Breast epithelium (tissue), 4 donors: ENCODE measurements at regions of chr18 and their contacts with region 1.

Region 1: GRCh38 chr18:35121531-35121930 is 80.3 kb downstream of the MAPRE2 start:
- DNase-seq: no peak
- H3K4me3 ChIP-seq: no peak overlapping the region
- H3K27ac ChIP-seq: no peak overlapping the region
- H3K4me1 ChIP-seq: no peaks in the 10 kb centered on the region
- H3K27me3 ChIP-seq: no peaks in the 10 kb centered on the region
- CTCF ChIP-seq: no peak
- POLR2A ChIP-seq: no peak

Region 2: DNA sequence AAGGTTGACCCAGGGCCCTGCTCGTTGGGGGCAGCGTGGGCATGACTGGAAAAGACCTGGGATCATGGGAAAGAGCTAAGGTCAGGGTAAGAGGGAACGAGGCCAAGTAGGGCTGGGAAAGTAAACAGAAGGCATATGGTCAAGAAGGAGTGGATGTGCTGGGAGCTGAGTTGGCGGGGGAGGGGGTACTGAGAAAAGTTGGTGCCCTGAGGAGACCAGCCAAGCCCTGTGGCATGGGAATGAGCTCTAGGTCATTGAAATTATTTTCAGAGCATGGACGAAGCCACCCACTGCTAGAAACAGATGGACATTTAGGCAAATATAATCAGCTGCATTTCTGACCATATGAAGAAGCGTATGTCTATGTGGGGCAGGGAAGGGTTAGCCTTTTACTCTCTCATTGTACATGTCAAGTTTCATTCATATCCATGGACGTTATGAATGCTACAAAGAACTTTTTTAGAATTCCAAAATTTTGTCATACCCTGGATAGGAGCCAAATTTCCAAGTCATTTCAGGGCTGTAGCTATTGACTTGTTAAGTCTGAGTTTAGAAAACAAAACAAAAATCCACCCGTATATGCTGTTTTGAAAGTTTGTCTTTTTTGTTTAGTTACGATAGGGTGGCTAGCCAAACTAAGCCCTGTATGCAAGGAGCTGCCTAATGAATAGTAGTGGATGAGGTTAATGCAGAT is 61.3 kb before region 1 on chr18:
- intact Hi-C with region 1: no loop called
- DNase-seq: no peak
- H3K4me3 ChIP-seq: no peak overlapping the region
- H3K27ac ChIP-seq: no peak overlapping the region
- H3K4me1 ChIP-seq: no peaks in the 10 kb centered on the region
- H3K27me3 ChIP-seq: no peaks in the 10 kb centered on the region
- CTCF ChIP-seq: no peak
- POLR2A ChIP-seq: no peak

Region 3: GRCh38 chr18:35073186-35074105 is 48.1 kb before region 1 on chr18:
- intact Hi-C with region 1: loop called (anchors 2 kb)
- DNase-seq: no peak
- H3K4me3 ChIP-seq: no peak overlapping the region
- H3K27ac ChIP-seq: no peak overlapping the region
- H3K4me1 ChIP-seq: no peaks in the 10 kb centered on the region
- H3K27me3 ChIP-seq: no peaks in the 10 kb centered on the region
- CTCF ChIP-seq: no peak
- POLR2A ChIP-seq: no peak

Region 4: DNA sequence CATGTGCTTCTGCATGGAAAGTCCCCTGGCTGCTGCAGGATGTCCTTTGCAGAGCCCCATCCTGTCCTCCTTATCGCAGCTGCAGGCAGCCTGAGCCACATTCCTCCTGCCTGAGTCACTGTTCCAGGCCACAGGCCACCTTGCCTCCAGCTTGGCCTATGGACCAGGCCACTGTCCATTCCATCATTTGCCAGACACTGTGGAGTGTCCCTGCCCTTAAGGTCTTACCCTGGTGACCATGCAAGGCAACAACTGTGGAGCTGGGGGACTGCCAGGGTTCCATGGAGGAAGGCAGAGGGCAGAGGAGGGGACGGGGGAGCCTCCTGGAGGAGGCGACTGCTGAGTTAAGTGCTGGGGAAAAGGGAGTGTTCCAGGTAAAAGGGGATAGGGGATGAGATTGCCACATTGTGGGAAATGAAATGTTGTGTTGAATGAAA is 337.5 kb after region 1 on chr18:
- intact Hi-C with region 1: no loop called
- DNase-seq: no peak
- H3K4me3 ChIP-seq: no peak overlapping the region
- H3K27ac ChIP-seq: no peak overlapping the region
- H3K4me1 ChIP-seq: no peaks in the 10 kb centered on the region
- H3K27me3 ChIP-seq: no peaks in the 10 kb centered on the region
- CTCF ChIP-seq: no peak
- POLR2A ChIP-seq: no peak